ENCODE measurements at regions of chr1 and their contacts with region 1.

Region 1: GRCh38 chr1:150010393-150011115 is at the start of gene OTUD7B:
- DNase-seq: peak; percentile 28 to 92
- H3K4me3 ChIP-seq: peak within 1 kb of the TSS; percentile 78 to 92
- H3K27ac ChIP-seq: peak within 1 kb of the TSS; percentile 97 to 99
- H3K4me1 ChIP-seq: peaks cover 12 to 15% of the 10 kb centered on the region in 2 donors
- H3K27me3 ChIP-seq: no peaks in the 10 kb centered on the region
- CTCF ChIP-seq: no peak
- total RNA-seq, gene OTUD7B: 7.1 TPM

Region 2: DNA sequence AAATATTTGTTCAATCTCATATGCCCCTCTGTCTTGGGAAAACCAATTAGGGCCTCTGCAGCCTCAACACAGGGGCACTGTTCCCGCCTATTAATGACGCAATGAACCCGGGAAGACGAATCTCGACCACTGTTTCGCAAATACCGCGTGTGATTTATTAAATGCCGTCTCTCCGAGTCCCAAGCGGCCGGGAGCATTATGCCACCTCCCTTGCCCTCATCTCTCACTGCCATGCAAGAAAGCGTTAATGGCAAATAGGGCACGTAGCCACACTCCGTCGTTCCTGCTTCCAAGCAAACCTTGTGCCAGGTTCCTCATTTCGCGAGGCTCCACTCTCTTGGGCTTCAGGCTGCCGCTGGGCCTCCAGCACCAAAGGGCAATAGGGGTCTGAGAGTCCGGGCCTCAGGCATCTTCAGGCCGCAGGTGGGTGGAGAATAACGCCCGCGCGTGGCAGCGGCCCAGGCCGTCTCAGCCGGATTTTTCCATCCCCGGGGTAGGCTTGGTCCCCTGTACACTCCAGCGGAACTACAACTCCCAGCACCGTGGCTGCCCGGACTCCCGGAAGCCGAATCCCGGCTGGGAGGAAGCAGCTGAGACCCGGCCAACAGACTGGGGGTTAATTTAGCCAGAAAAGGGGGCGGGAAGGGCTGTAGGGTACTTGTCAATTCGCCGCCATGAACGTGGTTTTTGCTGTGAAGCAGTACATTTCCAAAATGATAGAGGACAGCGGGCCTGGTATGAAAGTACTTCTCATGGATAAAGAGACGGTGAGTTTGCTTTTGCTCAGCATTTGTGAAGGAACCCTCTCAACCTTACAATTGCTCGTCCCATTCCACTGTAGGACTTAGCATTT is 56.9 kb after region 1 on chr1 and contains the start of gene VPS45:
- intact Hi-C with region 1: loop called (anchors 2 kb)
- DNase-seq: peak; percentile 64 to 96
- H3K4me3 ChIP-seq: peak within 1 kb of the TSS; percentile 61 to 67
- H3K27ac ChIP-seq: peak within 1 kb of the TSS; percentile 83 to 90
- H3K4me1 ChIP-seq: peaks cover 4 to 18% of the 10 kb centered on the region in 2 donors
- H3K27me3 ChIP-seq: no peaks in the 10 kb centered on the region
- CTCF ChIP-seq: peak in 1 of 3 experiments; percentile 5
- total RNA-seq, gene VPS45: 11.3 TPM

Measured in ascending aorta (tissue), 2 donors.